ENCODE measurements at regions of chr10 and their contacts with region 1.

Region 1: DNA sequence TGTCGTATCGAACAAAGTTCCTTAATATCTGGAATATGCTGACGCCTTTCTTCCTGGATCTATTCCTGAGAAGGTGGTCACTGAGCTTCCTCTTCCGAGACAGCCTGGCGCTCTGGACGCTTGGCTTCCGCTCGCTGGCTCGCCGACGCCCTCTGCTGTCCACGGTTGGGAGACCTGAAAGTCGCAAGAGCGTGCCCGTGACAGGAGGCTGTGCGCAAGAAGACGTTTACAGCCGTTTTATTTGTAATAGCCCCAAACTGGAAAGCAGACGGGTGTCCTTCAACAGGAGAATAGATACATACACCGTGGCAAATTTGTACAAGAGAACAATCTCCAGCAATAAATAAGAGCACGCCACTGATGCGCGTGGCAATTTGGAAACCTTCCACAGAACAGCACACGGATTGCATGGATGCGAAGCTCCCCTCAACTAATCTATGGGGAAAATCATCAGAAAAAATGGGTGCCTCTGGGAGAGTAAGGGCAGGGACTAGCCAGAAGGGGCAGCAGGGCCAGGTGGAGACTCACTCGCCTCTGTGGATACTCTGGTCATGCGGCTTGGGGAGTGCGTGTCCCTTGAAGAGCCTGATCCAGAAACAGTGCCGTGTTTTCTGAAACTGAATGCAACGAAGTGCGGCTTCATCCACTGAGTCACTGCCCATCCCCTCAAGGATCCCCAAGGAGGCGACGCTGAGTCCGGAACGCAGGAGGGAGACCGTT is 41.5 kb upstream of the BNIP3 start:
- DNase-seq: peak; percentile 85
- CTCF ChIP-seq: peak; percentile 99

Region 2: GRCh38 chr10:131885391-131886161 is 137.7 kb before region 1 on chr10:
- CTCF ChIA-PET with region 1: interaction called, 82 read pairs
- POLR2A ChIA-PET with region 1: no interaction called
- DNase-seq: peak; percentile 87
- CTCF ChIP-seq: peak; percentile 99

Region 3: DNA sequence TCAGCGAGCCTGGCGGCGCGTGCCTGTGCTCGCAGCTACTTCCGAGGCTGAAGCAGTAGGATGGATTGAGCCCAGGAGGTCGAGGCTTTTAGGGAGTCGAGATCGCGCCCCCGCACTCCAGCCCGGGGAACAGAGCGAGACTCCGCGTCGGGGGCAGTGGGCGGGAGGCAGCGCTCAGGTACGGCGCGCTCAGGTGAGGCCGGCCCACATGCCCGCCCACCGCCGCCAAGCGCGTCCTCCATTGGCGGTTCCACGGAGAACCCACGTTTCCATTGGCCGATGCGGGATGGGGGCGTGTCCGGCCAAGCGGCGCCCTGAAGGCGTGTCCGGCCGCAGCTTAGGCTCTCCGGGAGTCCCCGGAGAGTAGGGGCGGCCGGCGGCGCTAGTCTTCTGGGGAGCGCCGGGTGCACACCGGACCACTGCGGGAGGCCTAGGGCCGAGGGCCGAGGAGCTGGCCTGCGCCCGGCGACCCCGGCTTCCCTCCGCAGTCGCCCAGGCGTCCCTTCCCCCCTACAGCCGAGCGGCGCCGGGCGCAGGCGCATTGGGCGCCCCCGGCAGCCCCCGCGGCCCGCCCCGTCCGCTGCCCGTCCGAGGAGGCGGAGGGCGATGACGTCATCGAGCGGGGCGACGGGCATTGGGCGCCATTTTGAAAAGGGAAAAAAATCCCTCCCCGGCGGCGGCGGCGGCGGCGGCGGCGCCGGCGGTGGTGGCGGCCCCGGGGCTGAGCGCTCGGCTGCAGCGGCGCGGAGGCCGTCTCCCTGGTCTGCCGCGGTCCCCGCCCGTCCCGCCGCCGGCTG is 122.7 kb before region 1 on chr10 and contains the start of gene PPP2R2D:
- CTCF ChIA-PET with region 1: interaction called, 33 read pairs
- POLR2A ChIA-PET with region 1: no interaction called
- DNase-seq: peak; percentile 98
- CTCF ChIP-seq: no peak

Region 4: DNA sequence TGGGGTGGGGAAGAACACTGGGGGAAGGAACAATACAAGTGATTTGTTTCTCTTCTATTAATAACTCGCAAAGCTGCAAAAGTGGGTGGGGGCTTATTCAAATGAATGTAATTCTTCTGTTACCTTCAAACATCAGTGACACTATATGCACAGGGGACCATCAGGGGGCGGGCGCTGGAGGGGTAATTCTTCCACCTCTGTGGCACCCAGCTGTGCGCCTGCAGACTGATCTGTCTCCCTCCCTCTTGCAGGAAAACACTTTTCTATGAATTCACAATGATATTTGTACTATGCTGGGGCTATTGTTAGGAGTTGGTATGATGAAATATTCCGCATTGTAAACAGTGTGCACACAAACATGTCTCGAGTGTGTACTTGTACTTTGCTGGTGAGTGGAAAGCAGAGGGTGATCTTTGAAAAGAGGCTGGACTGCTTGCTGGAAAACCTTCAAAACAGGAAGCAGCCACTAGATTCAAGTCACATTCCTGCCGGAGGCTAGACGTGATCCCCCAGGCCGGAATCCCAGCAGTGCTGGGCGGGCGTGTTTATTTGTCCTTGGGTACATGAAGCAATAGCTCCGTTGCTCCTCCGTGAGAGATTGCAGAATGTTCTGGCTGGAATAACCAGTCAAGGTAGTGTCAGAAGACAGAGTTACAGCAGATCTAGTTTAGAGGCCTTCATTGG is 25.7 kb before region 1 on chr10:
- CTCF ChIA-PET with region 1: interaction called, 16 read pairs
- POLR2A ChIA-PET with region 1: no interaction called
- DNase-seq: no peak
- CTCF ChIP-seq: no peak

Region 5: GRCh38 chr10:132005147-132005546 is 18.1 kb before region 1 on chr10:
- CTCF ChIA-PET with region 1: interaction called, 16 read pairs
- POLR2A ChIA-PET with region 1: no interaction called
- DNase-seq: no peak
- CTCF ChIP-seq: no peak

Region 6: DNA sequence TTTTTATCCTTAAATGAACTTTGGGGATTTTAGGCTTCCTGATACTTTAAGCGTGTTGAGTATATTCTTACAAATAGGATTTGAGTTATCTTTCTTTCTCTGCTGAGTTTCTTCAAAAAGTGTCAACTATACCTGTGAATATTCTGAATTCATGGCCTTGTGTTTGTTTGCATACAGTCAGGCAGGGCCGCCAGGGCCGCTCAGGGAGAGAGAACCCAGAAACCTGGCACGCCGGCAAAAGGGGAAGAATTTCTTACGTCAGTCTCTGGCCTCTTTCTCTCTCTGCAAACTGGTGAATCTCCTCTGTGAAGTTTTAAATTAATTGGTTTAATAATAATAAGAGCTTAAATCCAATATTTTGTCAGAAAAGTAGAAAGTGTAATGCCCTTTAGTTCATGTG is 12.2 kb before region 1 on chr10:
- CTCF ChIA-PET with region 1: interaction called, 15 read pairs
- POLR2A ChIA-PET with region 1: no interaction called
- DNase-seq: no peak
- CTCF ChIP-seq: no peak

Region 7: DNA sequence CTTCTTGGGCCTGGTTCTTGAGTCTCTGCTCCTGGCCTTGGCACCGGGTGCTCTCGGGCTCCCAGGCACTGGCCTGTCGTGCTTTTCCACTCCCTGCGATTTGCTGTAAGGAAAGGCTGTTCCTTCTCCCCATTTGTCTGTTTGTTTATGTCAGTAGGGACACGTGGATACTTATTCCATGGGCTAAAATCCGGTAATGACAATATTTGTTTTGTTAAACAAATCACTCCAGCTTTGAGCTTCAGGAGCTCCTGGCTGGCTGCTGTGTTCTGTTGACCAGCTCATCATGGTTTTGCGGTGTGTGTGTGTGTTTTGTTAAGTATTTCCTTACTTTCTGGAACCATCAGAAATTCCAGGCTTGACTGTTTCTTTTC is 25.0 kb after region 1 on chr10:
- CTCF ChIA-PET with region 1: interaction called, 11 read pairs
- POLR2A ChIA-PET with region 1: no interaction called
- DNase-seq: no peak
- CTCF ChIP-seq: no peak

Region 8: DNA sequence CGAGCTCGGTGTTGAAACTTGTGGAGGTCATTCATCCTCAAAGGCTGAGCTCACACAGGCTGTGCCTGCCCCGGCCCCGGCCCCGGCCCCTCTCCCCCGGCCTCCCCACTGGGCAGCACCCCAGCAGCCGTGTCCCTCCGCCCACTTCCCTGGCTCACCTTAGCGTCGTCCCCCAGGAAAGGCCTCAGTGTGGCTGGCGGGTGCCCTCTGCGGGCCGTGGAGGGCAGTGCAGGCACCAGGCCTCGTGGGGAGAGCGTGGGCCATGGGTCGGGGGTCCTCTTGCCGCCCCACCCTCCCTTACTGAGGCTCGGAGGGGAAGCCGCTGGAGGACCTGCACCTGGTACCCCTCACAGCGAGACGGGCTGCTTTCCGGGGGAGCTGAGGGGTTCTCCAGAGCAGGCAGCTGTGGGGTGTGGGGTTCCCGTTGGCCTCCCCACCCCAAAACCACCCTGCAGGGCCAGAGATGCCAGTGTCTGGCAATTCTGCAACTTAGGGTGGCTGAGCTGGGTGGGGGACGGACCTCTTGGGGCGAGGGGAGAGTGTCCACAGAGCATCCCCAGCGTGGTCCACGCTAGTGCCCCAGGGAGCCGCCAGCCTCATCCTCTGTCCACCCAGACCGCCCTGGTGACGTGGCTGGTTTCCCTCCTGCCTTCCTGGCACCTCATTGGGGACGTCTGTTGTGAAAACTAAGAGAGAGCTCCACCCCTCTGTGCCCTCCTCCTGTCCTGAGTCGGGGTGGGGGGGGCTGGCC is 119.3 kb after region 1 on chr10:
- CTCF ChIA-PET with region 1: no interaction called
- POLR2A ChIA-PET with region 1: no interaction called
- DNase-seq: peak; percentile 83
- CTCF ChIP-seq: peak; percentile 87

Region 9: GRCh38 chr10:132229834-132230556 is 206.7 kb after region 1 on chr10:
- CTCF ChIA-PET with region 1: no interaction called
- POLR2A ChIA-PET with region 1: no interaction called
- DNase-seq: peak; percentile 85
- CTCF ChIP-seq: no peak